WTC11 (cell line): ENCODE measurements at regions of chr12 and their contacts with region 1.

Region 1: DNA sequence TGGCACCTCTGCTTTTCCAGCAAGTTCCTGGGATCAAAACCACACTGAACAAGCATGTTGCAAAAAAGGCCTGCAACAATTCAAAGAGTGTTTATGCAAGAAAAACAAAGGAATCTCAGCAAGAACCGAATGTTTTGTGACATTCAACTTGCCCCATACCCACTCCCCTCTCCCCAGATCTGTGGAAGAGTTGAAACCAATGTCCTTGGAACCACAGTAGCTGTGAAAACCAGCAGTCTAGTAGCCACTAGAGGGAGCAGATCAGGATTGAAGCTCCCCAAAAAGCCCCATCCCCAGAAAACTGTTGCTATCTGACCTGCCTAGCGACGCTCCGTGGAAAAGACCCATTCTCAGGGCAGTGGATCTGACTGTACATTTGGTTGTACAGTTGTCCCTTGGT is 27.1 kb downstream of the PRKAB1 start:
- DNase-seq: peak; percentile 32
- ATAC-seq: peak; percentile 88
- H3K4me3 Mint-ChIP-seq: no peak overlapping the region
- H3K27ac Mint-ChIP-seq: no peak overlapping the region
- H3K4me1 Mint-ChIP-seq: no peaks in the 10 kb centered on the region
- H3K27me3 Mint-ChIP-seq: no peaks in the 10 kb centered on the region
- CTCF ChIP-seq: no peak

Region 2: DNA sequence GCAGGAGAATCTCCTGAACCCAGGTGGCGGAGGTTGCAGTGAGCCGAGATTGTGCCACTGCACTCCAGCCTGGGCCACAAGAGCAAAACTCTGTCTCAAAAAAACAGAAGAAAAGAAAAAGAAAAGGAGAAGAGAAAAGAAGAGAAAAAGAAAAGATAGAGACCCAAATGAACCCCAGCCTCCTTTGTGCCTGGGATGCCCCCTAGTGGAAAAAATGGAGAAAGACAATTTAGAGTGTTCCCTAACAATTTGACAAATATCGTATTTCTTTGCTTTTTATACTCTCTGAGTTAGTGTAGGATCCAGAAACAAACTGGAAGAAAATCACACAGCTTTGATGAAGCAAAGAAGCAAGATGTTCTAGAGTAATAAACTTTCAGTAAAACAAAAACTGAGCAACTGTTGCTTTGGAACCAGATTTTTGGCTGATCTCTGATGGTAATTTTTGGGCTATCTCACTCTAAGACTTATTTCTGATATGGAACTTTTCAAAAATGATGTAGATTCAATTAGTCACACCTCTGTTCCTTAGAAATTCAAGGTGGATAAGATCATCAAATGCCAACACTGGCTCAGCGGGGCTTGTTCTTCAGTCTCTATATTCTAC is 45.7 kb before region 1 on chr12:
- CTCF ChIA-PET with region 1: no interaction called
- POLR2A ChIA-PET with region 1: no interaction called
- DNase-seq: no peak
- ATAC-seq: no peak
- H3K4me3 Mint-ChIP-seq: no peak overlapping the region
- H3K27ac Mint-ChIP-seq: no peak overlapping the region
- H3K4me1 Mint-ChIP-seq: no peaks in the 10 kb centered on the region
- H3K27me3 Mint-ChIP-seq: peaks cover 4% of the 10 kb centered on the region; the same call in 1 of the 2 replicates
- CTCF ChIP-seq: peak; percentile 85

Region 3: DNA sequence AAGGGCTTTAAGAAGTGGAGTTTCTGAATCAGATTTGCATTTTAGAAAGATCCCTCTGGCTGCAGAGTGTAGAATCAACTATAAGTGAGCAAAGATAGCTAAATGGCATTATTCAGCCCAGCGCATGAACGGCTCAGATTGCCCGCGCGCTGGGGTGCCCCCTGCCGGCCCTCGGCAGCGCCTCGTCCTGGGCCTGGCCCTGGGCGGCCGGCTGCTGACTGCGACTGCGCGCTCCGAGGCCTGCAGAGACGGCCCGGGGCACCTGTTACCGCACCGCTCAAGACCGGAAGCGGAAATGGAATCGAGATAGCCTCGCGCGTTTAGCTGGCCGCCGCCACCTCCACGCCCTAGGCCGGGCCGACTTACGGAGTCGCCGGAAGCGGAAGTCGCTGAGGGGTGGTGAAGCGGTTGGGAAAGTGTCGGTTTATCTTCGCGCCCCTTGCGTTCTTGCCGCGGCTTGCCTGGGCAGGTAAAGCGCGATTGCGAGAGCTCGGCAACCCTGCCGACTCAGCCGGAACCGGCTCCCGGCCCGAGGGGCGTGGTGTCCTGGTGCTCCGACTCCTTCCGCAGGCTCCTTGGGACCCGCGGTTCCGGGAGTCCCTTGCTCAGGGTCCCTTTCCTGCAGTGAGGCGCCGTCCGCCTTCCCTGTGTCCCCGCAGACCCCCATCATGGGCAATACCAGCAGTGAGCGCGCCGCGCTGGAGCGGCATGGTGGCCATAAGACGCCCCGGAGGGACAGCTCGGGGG is 27.3 kb before region 1 on chr12 and contains the start of gene PRKAB1:
- CTCF ChIA-PET with region 1: interaction called, 12 read pairs
- POLR2A ChIA-PET with region 1: no interaction called
- DNase-seq: peak; percentile 96
- ATAC-seq: peak; percentile 96
- H3K4me3 Mint-ChIP-seq: peak within 1 kb of the TSS; percentile 93
- H3K27ac Mint-ChIP-seq: peak within 1 kb of the TSS; percentile 85
- H3K4me1 Mint-ChIP-seq: peaks cover 13% of the 10 kb centered on the region
- H3K27me3 Mint-ChIP-seq: peaks cover 3% of the 10 kb centered on the region
- CTCF ChIP-seq: peak; percentile 50
- total RNA-seq, gene PRKAB1: 26.2 to 32.3 TPM (median 26.4 TPM) in 3 replicates

Region 4: DNA sequence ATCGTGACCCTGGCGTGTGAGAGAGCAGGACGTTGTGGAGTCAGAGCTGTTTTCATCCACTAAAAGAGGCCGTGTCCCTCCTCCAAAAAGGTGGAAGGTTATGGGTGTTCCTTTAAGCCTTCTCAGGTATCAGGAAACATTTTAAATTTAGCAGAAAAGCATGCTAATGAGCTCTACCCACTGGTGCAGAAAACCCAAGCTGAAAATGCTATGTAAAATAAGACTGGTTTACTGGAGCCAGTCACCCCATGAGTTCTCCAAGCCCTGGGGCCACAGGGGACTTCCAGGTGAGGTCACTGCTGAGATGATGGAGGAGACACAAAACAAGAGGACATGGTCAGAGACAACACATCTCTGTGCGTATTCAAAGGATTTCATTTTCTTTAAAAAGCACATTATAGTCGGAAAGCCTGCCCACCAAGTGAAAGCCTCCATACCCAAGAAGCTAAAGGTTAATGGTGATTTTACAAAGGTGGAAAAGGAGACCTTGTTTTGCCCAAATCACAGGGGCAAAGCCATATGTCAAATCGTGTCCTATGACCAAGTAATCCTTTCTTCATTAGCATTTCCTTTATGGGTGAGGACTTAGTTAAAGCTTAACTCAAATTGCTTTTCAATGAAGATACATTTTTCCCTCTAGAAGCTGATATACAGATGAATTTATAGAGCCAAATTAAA is 12.9 kb before region 1 on chr12:
- CTCF ChIA-PET with region 1: interaction called, 15 read pairs
- POLR2A ChIA-PET with region 1: no interaction called
- DNase-seq: no peak
- ATAC-seq: peak; percentile 12; the same call in 1 of the 2 replicates
- H3K4me3 Mint-ChIP-seq: no peak overlapping the region
- H3K27ac Mint-ChIP-seq: peak overlapping the region; percentile 93
- H3K4me1 Mint-ChIP-seq: peaks cover 18% of the 10 kb centered on the region
- H3K27me3 Mint-ChIP-seq: no peaks in the 10 kb centered on the region
- CTCF ChIP-seq: no peak

Region 5: DNA sequence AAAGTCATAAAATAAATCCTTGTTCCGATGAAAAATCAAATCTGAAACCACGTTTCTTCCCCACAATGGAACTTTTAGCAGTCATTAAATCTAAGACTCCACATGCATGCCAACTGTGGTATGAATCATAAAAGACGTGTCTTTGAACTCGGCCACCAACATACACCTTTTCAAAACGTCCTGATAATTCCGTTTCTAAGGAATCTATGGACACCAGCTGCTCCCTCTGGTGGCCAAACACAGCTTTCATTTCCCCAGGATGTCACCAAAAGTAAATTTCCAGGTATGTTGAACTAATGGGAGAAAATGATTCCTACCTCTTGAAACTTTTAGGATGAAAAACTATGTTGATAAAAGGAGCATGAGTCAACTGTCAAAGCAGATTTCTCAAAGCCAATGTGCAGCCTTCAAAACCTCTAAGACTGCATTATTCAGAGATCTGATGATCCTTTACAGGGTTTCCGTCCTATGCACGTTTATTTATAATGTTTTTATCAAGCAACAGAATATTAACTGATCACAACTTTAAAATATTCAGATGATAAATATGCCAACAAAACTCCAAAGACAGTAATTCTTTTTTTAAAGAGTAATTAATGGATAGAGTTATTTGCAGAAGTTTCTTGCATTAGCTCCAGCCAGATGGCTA is 85.9 kb after region 1 on chr12:
- CTCF ChIA-PET with region 1: interaction called, 16 read pairs
- POLR2A ChIA-PET with region 1: no interaction called
- DNase-seq: peak; percentile 37
- ATAC-seq: no peak
- H3K4me3 Mint-ChIP-seq: no peak overlapping the region
- H3K27ac Mint-ChIP-seq: peak overlapping the region; percentile 77; the same call in 1 of the 2 replicates
- H3K4me1 Mint-ChIP-seq: peaks cover 2% of the 10 kb centered on the region; the same call in 1 of the 2 replicates
- H3K27me3 Mint-ChIP-seq: no peaks in the 10 kb centered on the region
- CTCF ChIP-seq: peak; percentile 46; the same call in 1 of the 2 replicates